MCF 10A (cell line): ENCODE measurements at regions of chr21 and their contacts with region 1.

Region 1: GRCh38 chr21:26170471-26171257 is at the start of gene APP:
- DNase-seq: peak; percentile 77
- H3K4me3 Mint-ChIP-seq: peak within 1 kb of the TSS; percentile 96
- H3K27ac Mint-ChIP-seq: peak within 1 kb of the TSS; percentile 85
- H3K4me1 Mint-ChIP-seq: peaks cover 24% of the 10 kb centered on the region
- H3K27me3 Mint-ChIP-seq: no peaks in the 10 kb centered on the region
- CTCF ChIP-seq: peak; percentile 97
- total RNA-seq, gene APP: 459 and 472 TPM in 2 replicates

Region 2: GRCh38 chr21:25895565-25896205 is 275.0 kb before region 1 on chr21:
- CTCF ChIA-PET with region 1: interaction called, 7 read pairs
- POLR2A ChIA-PET with region 1: interaction called, 5 read pairs
- intact Hi-C with region 1: loop called (anchors 1 kb)
- DNase-seq: peak; percentile 55
- H3K4me3 Mint-ChIP-seq: no peak overlapping the region
- H3K27ac Mint-ChIP-seq: no peak overlapping the region
- H3K4me1 Mint-ChIP-seq: peaks cover 9% of the 10 kb centered on the region
- H3K27me3 Mint-ChIP-seq: no peaks in the 10 kb centered on the region
- CTCF ChIP-seq: peak; percentile 50

Region 3: DNA sequence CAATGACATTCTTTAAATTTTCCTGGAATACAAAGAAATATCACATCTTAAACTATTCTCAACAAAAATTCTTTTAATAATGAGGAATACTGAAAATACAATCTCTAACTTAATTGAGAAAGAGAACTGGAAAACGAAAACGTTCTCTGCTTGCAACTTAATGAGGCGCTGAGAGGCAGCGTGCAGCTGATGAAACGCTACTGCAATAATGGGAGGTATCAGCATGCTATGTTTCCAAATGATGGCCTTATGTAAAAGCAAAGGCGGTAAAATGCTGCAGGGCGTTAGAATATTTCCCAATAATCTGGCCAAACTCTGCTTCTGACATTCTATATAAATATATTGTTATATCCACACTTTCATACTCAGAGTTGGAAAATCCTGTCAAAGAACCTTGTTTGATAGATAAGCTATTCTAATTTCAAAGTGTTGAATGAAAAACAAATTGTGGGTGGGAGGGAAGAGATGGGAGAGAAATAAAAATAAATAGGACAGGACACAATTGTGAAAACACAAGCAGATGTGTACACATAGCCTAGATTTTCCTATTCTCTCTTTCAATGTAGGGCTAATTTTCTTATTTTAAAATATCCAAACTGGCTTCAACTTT is 70.9 kb before region 1 on chr21:
- CTCF ChIA-PET with region 1: interaction called, 3 read pairs
- POLR2A ChIA-PET with region 1: interaction called, 32 read pairs
- intact Hi-C with region 1: loop called (anchors 1 kb)
- DNase-seq: peak; percentile 85
- H3K4me3 Mint-ChIP-seq: peak overlapping the region; percentile 16
- H3K27ac Mint-ChIP-seq: peak overlapping the region; percentile 87
- H3K4me1 Mint-ChIP-seq: peaks cover 22% of the 10 kb centered on the region
- H3K27me3 Mint-ChIP-seq: no peaks in the 10 kb centered on the region
- CTCF ChIP-seq: no peak

Region 4: DNA sequence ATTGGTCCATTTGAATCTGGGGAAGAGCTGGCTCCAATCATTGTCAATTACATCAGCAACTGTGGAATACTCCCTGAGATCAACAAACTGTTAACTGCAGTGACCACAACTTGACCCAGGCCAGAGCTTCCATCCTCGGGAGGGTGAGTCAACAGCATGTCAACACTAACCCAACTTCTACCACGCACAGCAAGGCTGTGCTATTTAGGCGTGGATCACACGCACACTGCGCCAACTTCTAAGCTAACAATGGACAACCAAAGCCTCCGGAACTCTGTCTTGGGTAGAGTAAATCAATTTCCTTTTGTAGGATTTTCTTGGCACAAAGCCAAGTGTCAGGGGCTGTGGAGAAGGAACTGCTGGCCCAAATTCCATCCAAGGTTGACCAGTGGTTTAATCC is 30.5 kb before region 1 on chr21:
- CTCF ChIA-PET with region 1: interaction called, 6 read pairs
- POLR2A ChIA-PET with region 1: interaction called, 64 read pairs
- intact Hi-C with region 1: no loop called
- DNase-seq: peak; percentile 91
- H3K4me3 Mint-ChIP-seq: peak overlapping the region; percentile 14
- H3K27ac Mint-ChIP-seq: peak overlapping the region; percentile 85
- H3K4me1 Mint-ChIP-seq: peaks cover 20% of the 10 kb centered on the region
- H3K27me3 Mint-ChIP-seq: no peaks in the 10 kb centered on the region
- CTCF ChIP-seq: no peak

Region 5: GRCh38 chr21:26199456-26199855 is 28.8 kb after region 1 on chr21:
- CTCF ChIA-PET with region 1: interaction called, 3 read pairs
- POLR2A ChIA-PET with region 1: interaction called, 11 read pairs
- intact Hi-C with region 1: no loop called
- DNase-seq: peak; percentile 46
- H3K4me3 Mint-ChIP-seq: peak overlapping the region; percentile 27
- H3K27ac Mint-ChIP-seq: peak overlapping the region; percentile 71
- H3K4me1 Mint-ChIP-seq: peaks cover 12% of the 10 kb centered on the region
- H3K27me3 Mint-ChIP-seq: no peaks in the 10 kb centered on the region
- CTCF ChIP-seq: no peak

Region 6: DNA sequence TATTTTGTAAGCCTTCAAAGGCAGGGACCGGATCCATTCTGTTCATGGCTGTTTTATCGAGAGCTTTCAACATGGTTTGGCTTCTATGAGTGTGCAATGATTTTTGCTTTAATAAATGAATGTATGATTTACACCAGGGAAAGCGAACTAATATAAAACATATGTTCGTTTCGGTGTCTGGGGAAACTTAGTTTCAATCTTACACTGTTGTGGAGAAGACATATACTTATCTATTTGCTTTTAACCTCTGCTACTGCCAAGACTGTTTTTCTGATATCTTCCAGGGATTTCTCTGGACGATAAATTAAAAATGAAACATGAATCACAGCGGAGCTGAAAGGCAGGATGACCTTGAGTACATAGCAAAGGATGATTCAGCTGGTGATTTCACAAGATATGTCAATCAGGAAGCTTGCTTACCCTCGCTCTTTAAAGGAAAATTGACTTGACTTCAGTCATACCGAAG is 417.1 kb after region 1 on chr21:
- CTCF ChIA-PET with region 1: interaction called, 4 read pairs
- POLR2A ChIA-PET with region 1: interaction called, 4 read pairs
- intact Hi-C with region 1: loop called (anchors 5 kb)
- DNase-seq: peak; percentile 81
- H3K4me3 Mint-ChIP-seq: peak overlapping the region; percentile 30
- H3K27ac Mint-ChIP-seq: peak overlapping the region; percentile 28
- H3K4me1 Mint-ChIP-seq: peaks cover 13% of the 10 kb centered on the region
- H3K27me3 Mint-ChIP-seq: no peaks in the 10 kb centered on the region
- CTCF ChIP-seq: no peak